ENCODE measurements at regions of chr12 and their contacts with region 1.

Region 1: DNA sequence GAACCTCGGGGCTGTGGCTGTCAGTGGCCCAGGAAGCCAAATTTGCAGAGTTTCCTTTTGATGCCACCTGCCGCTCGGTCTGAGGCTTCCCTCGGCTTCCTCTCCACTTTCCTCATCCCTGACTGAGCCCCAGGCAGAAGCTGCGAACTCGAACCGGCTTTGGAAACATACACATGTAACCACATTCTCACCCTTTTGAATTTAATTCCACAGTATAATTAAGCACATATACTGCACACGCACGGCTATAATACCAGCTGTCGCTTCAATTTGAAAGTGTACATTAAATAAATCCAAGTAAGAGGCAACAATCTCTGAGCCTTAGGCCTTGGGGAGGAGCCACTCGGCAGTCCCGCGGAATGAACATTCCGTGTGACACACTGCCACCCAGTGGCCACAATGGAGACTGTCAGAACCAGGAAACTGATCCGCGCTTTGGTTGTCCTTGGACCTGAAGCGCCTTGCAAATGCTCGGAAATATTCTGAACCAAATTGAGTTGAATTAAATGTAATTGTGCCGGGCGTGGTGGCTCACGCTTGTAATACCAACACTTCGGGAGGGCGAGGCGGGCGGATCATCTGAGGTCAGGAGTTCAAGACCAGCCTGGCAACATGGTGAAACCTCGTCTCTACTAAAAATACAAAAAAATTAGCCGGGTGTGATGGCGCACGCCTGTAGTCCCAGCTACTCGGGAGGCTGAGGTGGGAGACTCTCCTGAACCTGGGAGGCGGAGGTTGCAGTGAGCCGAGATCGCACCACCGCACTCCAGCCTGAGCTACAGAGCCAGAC is 117.9 kb upstream of the TMPO start:
- DNase-seq: peak; percentile 89
- H3K4me3 Mint-ChIP-seq: peak overlapping the region; percentile 73
- H3K27ac Mint-ChIP-seq: peak overlapping the region; percentile 4
- H3K4me1 Mint-ChIP-seq: peaks cover 30% of the 10 kb centered on the region
- H3K27me3 Mint-ChIP-seq: peaks cover 2% of the 10 kb centered on the region

Region 2: DNA sequence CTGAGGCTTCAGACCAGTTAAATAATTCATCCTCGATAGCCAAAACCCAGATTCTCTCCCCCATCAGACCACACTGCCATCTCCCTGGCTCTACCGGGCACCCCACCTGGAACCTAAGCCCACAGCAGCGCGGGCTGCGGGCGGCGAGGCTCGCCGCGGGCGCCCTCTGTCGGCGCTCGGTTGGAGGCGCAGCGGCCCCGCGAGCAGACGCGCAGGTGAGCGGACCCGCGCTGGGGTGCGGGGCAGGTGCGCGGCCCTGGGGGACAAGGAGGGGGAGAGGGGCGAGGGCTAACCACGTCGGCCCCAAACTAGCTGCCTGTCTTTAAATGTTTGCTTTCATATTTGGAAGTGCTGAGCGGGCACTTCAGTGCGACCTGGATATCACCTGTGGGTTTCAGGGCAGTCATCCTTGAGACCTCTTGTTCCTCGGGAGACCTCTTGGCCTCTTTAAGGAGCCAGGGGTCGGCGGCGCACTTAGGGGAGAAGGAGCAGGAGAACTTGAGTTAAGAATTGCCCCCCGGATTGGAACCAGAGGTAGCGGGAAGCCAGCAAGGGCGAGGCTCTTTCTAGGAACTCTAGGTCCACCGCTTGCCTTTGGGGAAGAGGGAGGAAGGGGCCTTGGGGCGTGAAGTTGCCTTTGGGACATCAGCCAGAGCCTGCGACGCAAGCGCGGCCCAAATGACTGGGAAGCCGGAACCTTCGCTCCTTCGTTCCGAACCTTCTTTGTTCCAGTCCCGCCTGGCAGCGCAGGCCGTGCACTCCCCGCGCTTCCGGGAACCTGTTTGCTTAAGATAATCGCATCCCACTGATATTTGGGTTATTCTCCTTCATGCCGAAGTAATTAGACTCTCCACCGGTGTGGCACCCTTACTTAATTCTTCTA is 1411.8 kb before region 1 on chr12:
- CTCF ChIA-PET with region 1: no interaction called
- intact Hi-C with region 1: loop called (anchors 1 kb)
- DNase-seq: peak; percentile 30
- H3K4me3 Mint-ChIP-seq: peak overlapping the region; percentile 61
- H3K27ac Mint-ChIP-seq: no peak overlapping the region
- H3K4me1 Mint-ChIP-seq: peaks cover 6% of the 10 kb centered on the region
- H3K27me3 Mint-ChIP-seq: peaks cover 10% of the 10 kb centered on the region

Region 3: GRCh38 chr12:97308576-97309198 is 1088.8 kb before region 1 on chr12:
- CTCF ChIA-PET with region 1: no interaction called
- intact Hi-C with region 1: loop called (anchors 2 kb)
- DNase-seq: no peak
- H3K4me3 Mint-ChIP-seq: no peak overlapping the region
- H3K27ac Mint-ChIP-seq: no peak overlapping the region
- H3K4me1 Mint-ChIP-seq: no peaks in the 10 kb centered on the region
- H3K27me3 Mint-ChIP-seq: peaks cover 5% of the 10 kb centered on the region

Region 4: DNA sequence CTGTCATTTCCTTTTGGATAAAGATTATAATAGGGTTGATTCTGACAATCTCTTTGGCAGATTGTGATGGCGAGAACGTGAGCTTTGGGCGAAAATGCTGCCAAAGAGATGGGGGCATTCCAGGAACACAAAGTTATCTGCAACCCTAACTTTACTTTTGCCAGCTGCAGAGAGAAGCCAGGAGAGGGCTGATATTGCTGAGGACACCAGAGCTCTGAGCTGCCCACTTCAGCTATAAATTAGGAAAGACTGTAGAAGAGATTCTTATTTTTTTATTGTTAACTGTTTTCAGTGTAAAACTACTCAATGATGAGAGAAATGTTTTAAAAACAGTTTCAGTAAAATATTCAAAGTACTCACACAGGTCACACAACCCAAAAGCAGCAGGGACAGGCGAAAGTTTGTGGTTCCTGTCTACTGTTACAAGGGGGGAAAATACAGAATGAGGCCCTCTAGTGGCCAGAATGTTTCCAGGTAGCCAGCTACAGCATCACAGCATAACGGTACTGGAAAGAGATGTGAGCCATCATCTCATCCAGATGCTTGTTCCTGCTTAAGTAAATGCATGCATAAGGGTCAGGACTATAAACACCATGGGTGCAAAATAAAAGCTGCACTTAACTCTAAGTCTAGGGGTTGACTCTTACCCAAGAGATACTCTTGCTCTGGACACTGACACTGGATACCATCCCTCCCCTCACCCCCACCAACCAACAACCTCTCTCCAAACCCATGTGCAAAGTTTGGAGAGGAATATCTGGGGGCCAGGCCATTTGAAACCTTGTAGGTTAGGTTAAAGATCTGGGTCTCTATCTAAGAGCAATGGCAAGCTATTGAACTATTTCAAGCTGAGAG is 436.5 kb before region 1 on chr12:
- CTCF ChIA-PET with region 1: no interaction called
- intact Hi-C with region 1: loop called (anchors 5 kb)
- DNase-seq: peak; percentile 41
- H3K4me3 Mint-ChIP-seq: no peak overlapping the region
- H3K27ac Mint-ChIP-seq: no peak overlapping the region
- H3K4me1 Mint-ChIP-seq: no peaks in the 10 kb centered on the region
- H3K27me3 Mint-ChIP-seq: no peaks in the 10 kb centered on the region

Region 5: DNA sequence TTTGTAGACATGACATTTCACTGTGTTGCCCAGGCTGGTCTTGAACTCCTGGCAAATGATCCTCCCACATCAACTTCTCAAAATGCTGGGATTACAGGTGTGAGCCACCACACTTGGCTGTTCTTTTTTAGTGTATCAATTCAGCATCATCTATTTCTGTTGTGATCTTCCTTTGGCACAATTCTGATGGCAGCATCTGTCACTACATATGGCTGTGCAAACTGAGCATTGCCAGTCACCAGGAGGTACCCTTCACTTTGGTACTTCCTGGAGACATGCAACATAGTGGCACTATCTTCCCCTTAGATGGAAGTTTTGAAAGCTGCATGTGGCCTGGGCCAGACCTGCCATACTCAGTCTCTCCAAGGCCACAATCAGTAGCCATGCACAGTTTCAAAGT is 349.2 kb before region 1 on chr12:
- CTCF ChIA-PET with region 1: no interaction called
- intact Hi-C with region 1: loop called (anchors 5 kb)
- DNase-seq: no peak
- H3K4me3 Mint-ChIP-seq: no peak overlapping the region
- H3K27ac Mint-ChIP-seq: no peak overlapping the region
- H3K4me1 Mint-ChIP-seq: no peaks in the 10 kb centered on the region
- H3K27me3 Mint-ChIP-seq: peaks cover 1% of the 10 kb centered on the region

Region 6: DNA sequence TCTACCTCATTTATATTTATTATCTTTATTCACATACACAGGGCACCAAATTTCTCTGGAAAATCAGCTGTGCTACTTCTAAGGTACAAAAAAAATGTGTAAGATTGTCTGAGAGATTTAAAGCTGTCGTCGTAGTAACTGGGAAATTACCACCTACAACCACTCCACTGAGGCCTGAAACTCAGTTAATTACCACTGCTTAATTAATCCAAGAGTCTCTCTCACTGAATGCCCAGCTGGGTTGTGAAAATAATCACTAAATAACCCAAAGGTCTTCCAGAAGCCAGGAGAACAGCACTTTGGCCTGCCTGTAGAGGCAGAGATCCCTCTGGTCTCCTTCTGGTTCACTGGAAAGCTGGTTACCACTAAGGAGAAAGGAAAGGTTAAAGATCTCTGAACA is 89.4 kb before region 1 on chr12:
- CTCF ChIA-PET with region 1: no interaction called
- intact Hi-C with region 1: no loop called
- DNase-seq: no peak
- H3K4me3 Mint-ChIP-seq: no peak overlapping the region
- H3K27ac Mint-ChIP-seq: no peak overlapping the region
- H3K4me1 Mint-ChIP-seq: no peaks in the 10 kb centered on the region
- H3K27me3 Mint-ChIP-seq: peaks cover 12% of the 10 kb centered on the region

Region 7: GRCh38 chr12:98373025-98373554 is 24.4 kb before region 1 on chr12:
- CTCF ChIA-PET with region 1: interaction called, 9 read pairs
- intact Hi-C with region 1: loop called (anchors 1 kb)
- DNase-seq: no peak
- H3K4me3 Mint-ChIP-seq: no peak overlapping the region
- H3K27ac Mint-ChIP-seq: no peak overlapping the region
- H3K4me1 Mint-ChIP-seq: peaks cover 9% of the 10 kb centered on the region
- H3K27me3 Mint-ChIP-seq: peaks cover 30% of the 10 kb centered on the region

Measured in activated naive CD4-positive, alpha-beta T cell treated with anti-CD3 and anti-CD28 coated beads for 36 hours (primary cell).